Activated CD4-positive, alpha-beta T cell treated with anti-CD3 and anti-CD28 coated beads, Interleukin-2, amount 10 ng/mL, durations not matched to agents 7 days and 5 days (primary cell): ENCODE measurements at regions of chr6 and their contacts with region 1.

Region 1: GRCh38 chr6:33197431-33198048 is 2.9 kb downstream of the RXRB start:
- DNase-seq: peak; percentile 54
- H3K4me3 Mint-ChIP-seq: peak overlapping the region; percentile 100
- H3K27ac Mint-ChIP-seq: peak overlapping the region; percentile 83
- H3K4me1 Mint-ChIP-seq: peaks cover 48% of the 10 kb centered on the region
- H3K27me3 Mint-ChIP-seq: peaks cover 8% of the 10 kb centered on the region

Region 2: GRCh38 chr6:33161354-33162331 is 35.9 kb before region 1 on chr6:
- CTCF ChIA-PET with region 1: interaction called, 10 read pairs
- POLR2A ChIA-PET with region 1: no interaction called
- DNase-seq: peak; percentile 82
- H3K4me3 Mint-ChIP-seq: peak overlapping the region; percentile 77
- H3K27ac Mint-ChIP-seq: peak overlapping the region; percentile 87
- H3K4me1 Mint-ChIP-seq: peaks cover 19% of the 10 kb centered on the region
- H3K27me3 Mint-ChIP-seq: peaks cover 3% of the 10 kb centered on the region

Region 3: DNA sequence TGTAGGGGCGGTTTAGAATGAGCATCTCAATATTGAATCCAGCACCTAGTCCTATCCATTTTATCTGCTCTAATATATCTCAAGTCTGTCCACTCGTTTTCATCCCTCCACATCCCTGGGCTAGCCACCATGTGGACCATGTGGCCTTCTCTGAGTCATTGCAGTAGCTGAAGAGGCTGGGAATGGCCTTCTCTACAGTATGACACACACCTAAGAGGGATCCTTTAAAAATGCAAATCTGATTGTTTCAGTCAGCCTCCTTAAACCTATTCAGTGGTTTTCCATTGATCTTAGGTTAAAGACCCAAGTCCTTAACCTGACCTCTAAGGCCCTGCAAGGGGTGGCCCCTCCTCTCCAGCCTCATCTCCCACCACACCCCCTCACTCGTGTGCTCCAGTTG is 20.1 kb after region 1 on chr6:
- CTCF ChIA-PET with region 1: no interaction called
- POLR2A ChIA-PET with region 1: no interaction called
- DNase-seq: no peak
- H3K4me3 Mint-ChIP-seq: no peak overlapping the region
- H3K27ac Mint-ChIP-seq: peak overlapping the region; percentile 75
- H3K4me1 Mint-ChIP-seq: peaks cover 11% of the 10 kb centered on the region
- H3K27me3 Mint-ChIP-seq: peaks cover 50% of the 10 kb centered on the region